HepG2 (cell line): ENCODE measurements at regions of chrX and their contacts with region 1.

Region 1: DNA sequence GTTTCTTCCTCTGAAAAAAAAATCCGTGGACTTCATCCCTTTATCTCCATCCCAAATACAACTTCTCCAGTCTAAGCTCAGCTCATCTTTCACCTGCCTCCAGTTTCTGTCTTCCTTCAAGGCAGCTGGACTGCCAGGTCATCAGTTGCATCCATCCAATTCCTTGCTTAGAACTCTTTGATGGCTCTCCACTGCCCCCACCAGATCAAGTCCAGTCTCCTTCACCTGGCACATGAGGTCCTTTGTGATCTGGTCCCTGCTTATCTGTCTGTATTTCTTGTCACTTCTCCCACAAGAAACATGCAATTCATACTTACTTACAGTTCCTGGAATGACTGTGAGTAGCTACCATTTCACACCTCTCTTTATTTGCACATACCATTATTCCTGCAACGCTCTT is 33.8 kb downstream of the OTUD6A start:
- DNase-seq: peak; percentile 8
- ATAC-seq: peak; percentile 68
- H3K4me3 ChIP-seq: no peak overlapping the region
- H3K27ac ChIP-seq: no peak overlapping the region
- H3K4me1 ChIP-seq: no peaks in the 10 kb centered on the region
- H3K27me3 ChIP-seq: no peaks in the 10 kb centered on the region
- CTCF ChIP-seq: peak; percentile 53
- EP300 ChIP-seq: no peak
- POLR2A ChIP-seq: no peak
- RAD21 ChIP-seq: no peak

Region 2: DNA sequence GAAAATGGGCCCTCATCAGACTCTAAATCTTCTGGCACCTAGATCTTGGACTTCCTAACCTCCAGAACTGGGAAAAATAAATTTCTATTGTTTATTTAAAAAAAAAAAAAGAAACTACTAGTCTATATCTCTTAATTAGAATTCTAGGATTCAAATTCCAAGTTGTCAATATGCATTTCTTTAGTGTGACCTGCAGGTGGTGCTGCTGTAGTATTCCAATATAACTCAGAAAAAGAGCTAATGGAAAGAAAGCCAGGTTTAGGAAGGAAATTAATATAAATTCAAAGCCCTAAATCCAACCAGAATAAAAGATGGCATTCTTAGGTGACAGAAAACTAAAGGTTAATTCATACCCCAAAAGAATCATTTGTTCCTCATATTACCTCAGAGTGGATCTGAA is 671.9 kb before region 1 on chrX:
- CTCF ChIA-PET with region 1: interaction called, 7 read pairs
- POLR2A ChIA-PET with region 1: no interaction called
- in situ Hi-C with region 1: no loop called
- intact Hi-C with region 1: loop called (anchors 5 kb)
- DNase-seq: peak; percentile 4
- ATAC-seq: no peak
- H3K4me3 ChIP-seq: no peak overlapping the region
- H3K27ac ChIP-seq: no peak overlapping the region
- H3K4me1 ChIP-seq: no peaks in the 10 kb centered on the region
- H3K27me3 ChIP-seq: no peaks in the 10 kb centered on the region
- CTCF ChIP-seq: peak; percentile 15; the same call in 1 of the 2 replicates
- EP300 ChIP-seq: no peak
- POLR2A ChIP-seq: no peak
- RAD21 ChIP-seq: no peak

Region 3: GRCh38 chrX:69493193-69493592 is 602.9 kb before region 1 on chrX:
- CTCF ChIA-PET with region 1: interaction called, 13 read pairs
- POLR2A ChIA-PET with region 1: no interaction called
- in situ Hi-C with region 1: loop called (anchors 5 kb)
- intact Hi-C with region 1: loop called (anchors 5 kb)
- DNase-seq: peak; percentile 44
- ATAC-seq: peak; percentile 93
- H3K4me3 ChIP-seq: peak overlapping the region in 1 of 3 experiments; percentile 50; a peak in 2 of 6 replicates
- H3K27ac ChIP-seq: no peak overlapping the region
- H3K4me1 ChIP-seq: peaks cover 7% of the 10 kb centered on the region; the same call in 1 of the 2 replicates
- H3K27me3 ChIP-seq: peaks cover 0 to 4% of the 10 kb centered on the region in 2 experiments; a peak in 1 of 5 replicates
- CTCF ChIP-seq: peak; percentile 78
- EP300 ChIP-seq: no peak
- POLR2A ChIP-seq: no peak
- RAD21 ChIP-seq: peak; percentile 71

Region 4: GRCh38 chrX:69538321-69538876 is 557.7 kb before region 1 on chrX:
- CTCF ChIA-PET with region 1: no interaction called
- POLR2A ChIA-PET with region 1: no interaction called
- in situ Hi-C with region 1: no loop called
- intact Hi-C with region 1: loop called (anchors 5 kb)
- DNase-seq: peak; percentile 52
- ATAC-seq: peak; percentile 98
- H3K4me3 ChIP-seq: peak overlapping the region; percentile 63 to 73 (median 73)
- H3K27ac ChIP-seq: no peak overlapping the region
- H3K4me1 ChIP-seq: peaks cover 42% of the 10 kb centered on the region
- H3K27me3 ChIP-seq: no peaks in the 10 kb centered on the region
- CTCF ChIP-seq: peak; percentile 97
- EP300 ChIP-seq: no peak
- POLR2A ChIP-seq: no peak
- RAD21 ChIP-seq: peak; percentile 95